ENCODE measurements at regions of chr20 and their contacts with region 1.

Region 1: GRCh38 chr20:51595058-51595532 is 52.6 kb upstream of the NFATC2 start:
- DNase-seq: peak; percentile 88
- ATAC-seq: peak; percentile 100
- H3K4me3 Mint-ChIP-seq: no peak overlapping the region
- H3K27ac Mint-ChIP-seq: peak overlapping the region; percentile 72
- H3K4me1 Mint-ChIP-seq: peaks cover 35% of the 10 kb centered on the region
- H3K27me3 Mint-ChIP-seq: peaks cover 4% of the 10 kb centered on the region

Region 2: GRCh38 chr20:50992733-50993457 is 602.2 kb before region 1 on chr20:
- CTCF ChIA-PET with region 1: interaction called, 20 read pairs
- POLR2A ChIA-PET with region 1: no interaction called
- DNase-seq: peak; percentile 64
- ATAC-seq: peak; percentile 98
- H3K4me3 Mint-ChIP-seq: no peak overlapping the region
- H3K27ac Mint-ChIP-seq: no peak overlapping the region
- H3K4me1 Mint-ChIP-seq: no peaks in the 10 kb centered on the region
- H3K27me3 Mint-ChIP-seq: peaks cover 5% of the 10 kb centered on the region

Region 3: DNA sequence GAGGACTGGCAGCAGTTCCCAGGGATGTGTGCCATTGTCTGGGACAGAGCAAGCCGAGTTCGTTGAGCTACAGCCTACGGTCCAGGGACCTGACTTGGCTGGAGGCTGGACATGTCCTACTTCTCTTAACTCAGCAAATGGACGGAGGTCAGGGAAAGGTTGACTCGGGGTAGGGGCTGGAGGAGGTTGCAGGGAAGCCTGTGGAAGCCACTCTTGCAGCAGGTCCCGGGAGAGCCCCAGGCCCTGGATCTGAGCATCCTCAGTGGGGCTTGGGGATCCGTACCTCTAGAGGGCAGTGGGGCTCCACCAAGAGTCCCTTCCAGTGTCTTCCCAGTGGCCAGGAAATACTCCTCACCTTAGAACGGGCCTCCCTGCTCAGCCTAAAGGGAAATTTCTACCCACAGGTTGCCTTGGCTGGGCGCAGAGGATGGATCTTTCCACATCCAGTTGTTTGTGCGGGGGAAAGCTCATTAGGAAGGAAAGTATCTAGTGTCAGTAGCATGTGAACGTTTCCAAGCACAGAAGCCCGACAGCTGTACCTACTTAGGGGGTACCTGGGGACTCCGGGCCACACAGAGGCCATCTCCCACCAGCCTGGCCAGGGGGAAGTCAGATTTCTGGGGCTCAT is 222.8 kb before region 1 on chr20:
- CTCF ChIA-PET with region 1: interaction called, 41 read pairs
- POLR2A ChIA-PET with region 1: no interaction called
- DNase-seq: peak; percentile 67
- ATAC-seq: peak; percentile 79
- H3K4me3 Mint-ChIP-seq: no peak overlapping the region
- H3K27ac Mint-ChIP-seq: no peak overlapping the region
- H3K4me1 Mint-ChIP-seq: peaks cover 29% of the 10 kb centered on the region
- H3K27me3 Mint-ChIP-seq: no peaks in the 10 kb centered on the region

Region 4: GRCh38 chr20:51404298-51405060 is 190.6 kb before region 1 on chr20:
- CTCF ChIA-PET with region 1: interaction called, 23 read pairs
- POLR2A ChIA-PET with region 1: interaction called, 6 read pairs
- DNase-seq: peak; percentile 88
- ATAC-seq: peak; percentile 79
- H3K4me3 Mint-ChIP-seq: no peak overlapping the region
- H3K27ac Mint-ChIP-seq: peak overlapping the region; percentile 98
- H3K4me1 Mint-ChIP-seq: peaks cover 93% of the 10 kb centered on the region
- H3K27me3 Mint-ChIP-seq: no peaks in the 10 kb centered on the region

Region 5: DNA sequence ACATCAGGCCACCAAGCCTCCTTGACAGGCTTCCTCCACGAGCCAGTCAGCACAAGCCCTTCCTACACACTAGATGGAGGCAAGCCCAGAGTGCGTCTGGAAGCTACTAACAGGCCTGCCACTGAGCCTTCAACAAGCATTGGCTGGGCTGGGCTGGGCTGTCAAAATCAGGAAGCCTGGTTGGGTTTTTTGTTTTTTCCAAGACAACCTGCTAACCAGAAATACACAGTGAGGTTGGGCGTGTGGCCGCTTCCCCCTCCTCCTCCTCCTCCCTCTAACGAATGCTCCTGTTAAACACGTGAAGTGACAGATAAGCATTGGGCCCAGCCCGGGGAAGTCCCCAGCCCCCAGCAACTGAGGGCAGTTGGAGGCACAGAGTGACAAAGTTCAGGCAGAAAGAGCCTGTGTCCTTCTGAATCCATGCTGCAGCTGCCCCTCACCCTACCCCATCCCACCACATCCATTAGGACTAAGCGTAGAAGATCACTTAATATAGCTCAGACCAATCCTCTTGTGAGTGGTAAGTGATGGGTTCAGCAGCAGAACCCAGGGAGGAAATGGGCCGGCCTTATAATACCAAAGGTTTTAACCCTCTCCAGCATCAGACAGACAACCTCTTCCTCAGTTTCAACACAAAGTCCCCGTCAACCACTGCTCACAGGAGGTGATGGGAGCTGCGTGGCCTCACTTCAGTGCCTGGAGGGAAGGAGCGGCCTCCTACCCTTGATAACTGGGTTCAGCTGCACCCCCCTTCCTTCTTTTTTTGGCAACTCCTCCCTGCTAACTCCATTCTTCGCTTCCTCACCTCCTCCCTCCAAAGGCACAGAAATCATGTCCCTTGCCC is 53.7 kb before region 1 on chr20:
- CTCF ChIA-PET with region 1: interaction called, 29 read pairs
- POLR2A ChIA-PET with region 1: interaction called, 4 read pairs
- DNase-seq: peak; percentile 93
- ATAC-seq: peak; percentile 86
- H3K4me3 Mint-ChIP-seq: peak overlapping the region; percentile 93
- H3K27ac Mint-ChIP-seq: peak overlapping the region; percentile 98
- H3K4me1 Mint-ChIP-seq: peaks cover 55% of the 10 kb centered on the region
- H3K27me3 Mint-ChIP-seq: peaks cover 11% of the 10 kb centered on the region

Region 6: GRCh38 chr20:51584737-51585136 is 10.4 kb before region 1 on chr20:
- CTCF ChIA-PET with region 1: interaction called, 12 read pairs
- POLR2A ChIA-PET with region 1: no interaction called
- DNase-seq: no peak
- ATAC-seq: no peak
- H3K4me3 Mint-ChIP-seq: no peak overlapping the region
- H3K27ac Mint-ChIP-seq: peak overlapping the region; percentile 56
- H3K4me1 Mint-ChIP-seq: peaks cover 10% of the 10 kb centered on the region
- H3K27me3 Mint-ChIP-seq: peaks cover 5% of the 10 kb centered on the region

Region 7: GRCh38 chr20:51624157-51624731 is 29.1 kb after region 1 on chr20:
- CTCF ChIA-PET with region 1: interaction called, 13 read pairs
- POLR2A ChIA-PET with region 1: no interaction called
- DNase-seq: peak; percentile 70
- ATAC-seq: peak; percentile 67
- H3K4me3 Mint-ChIP-seq: no peak overlapping the region
- H3K27ac Mint-ChIP-seq: no peak overlapping the region
- H3K4me1 Mint-ChIP-seq: peaks cover 5% of the 10 kb centered on the region
- H3K27me3 Mint-ChIP-seq: no peaks in the 10 kb centered on the region

Measured in activated CD8-positive, alpha-beta T cell treated with anti-CD3 and anti-CD28 coated beads, Interleukin-2, amount 10 ng/mL, durations not matched to agents 7 days and 5 days (primary cell).